Sciatic nerve (tissue), 2 donors: ENCODE measurements at regions of chr2 and their contacts with region 1.

Region 1: DNA sequence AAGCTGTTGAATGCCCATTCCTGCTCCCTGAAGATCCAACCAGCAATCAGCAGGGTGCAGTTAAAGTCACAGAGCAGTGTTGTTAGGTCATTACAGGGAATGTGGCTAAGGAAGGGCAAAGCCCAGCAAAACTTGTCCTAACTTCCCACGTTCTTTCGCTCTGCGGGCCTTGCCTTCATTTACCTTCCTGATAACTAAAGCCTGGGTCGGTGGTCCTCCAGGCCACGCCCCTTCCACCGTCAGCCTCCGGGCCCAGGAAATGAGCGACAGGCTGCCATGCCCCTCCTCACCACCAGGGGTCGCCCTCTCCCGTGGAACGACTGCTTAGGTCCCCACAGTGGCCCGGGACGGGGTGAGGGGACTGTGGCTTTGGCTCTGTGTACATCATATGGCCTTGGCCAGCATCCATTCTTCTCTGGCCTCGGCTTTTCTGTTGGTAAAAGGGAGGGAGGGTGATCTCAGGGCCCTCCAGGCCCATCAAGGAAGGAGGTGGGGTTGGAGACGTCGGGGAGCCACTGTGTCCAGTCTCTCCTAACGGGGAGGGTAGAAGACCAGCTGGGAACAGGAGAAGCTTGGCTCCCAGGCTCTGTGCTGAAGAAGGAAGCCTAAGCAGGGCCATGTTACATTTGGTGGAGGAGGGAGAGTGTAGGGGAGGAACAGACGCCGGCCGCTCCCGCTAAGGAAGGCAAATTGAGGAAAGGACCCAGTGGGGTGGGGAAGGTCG is 2.2 kb downstream of the SH2D6 start:
- DNase-seq: peak; percentile 95
- ATAC-seq: peak; percentile 80

Region 2: DNA sequence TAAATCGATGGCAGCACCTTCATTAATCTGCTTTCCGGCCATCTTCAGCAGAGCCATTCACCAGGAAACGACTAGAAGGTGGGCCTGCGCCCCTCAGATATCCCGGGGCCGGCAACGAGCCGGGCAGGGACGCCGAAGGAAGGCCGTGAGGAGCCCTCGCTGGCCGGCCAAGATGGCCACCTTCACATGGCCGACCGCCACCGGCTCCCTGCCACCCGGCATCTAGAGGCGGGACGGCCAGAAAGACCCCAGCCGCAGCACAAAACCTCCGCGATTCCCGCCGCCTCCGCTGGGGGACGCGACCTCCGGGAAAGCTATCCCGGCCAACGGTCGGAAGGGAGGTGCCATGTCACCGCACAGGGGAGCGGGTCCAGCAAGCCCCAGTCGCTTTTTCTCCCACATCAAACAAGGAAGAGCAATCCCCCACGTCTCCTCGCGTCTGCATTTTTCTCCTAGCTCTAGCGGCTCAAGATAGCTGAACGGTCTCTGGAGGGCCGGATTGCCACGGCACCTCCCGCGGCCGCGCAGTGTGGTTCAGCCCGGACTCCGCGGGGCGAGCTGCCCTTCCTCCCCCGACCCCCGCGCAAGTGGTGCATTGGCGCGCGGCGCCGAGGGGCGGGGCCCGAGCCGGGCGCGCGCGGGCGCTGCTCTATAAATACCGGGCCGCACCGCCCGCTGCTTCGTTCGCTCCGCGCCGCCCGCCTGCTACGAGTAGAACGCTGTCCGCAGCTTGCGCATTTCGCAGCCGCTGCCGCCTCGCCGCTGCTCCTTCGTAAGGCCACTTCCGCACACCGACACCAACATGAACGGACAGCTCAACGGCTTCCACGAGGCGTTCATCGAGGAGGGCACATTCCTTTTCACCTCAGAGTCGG is 118.0 kb after region 1 on chr2 and contains the start of gene MAT2A:
- intact Hi-C with region 1: loop called (anchors 5 kb)
- DNase-seq: peak; percentile 96
- ATAC-seq: peak; percentile 95
- total RNA-seq, gene MAT2A: 168 TPM

Region 3: GRCh38 chr2:85551698-85552678 is 131.3 kb after region 1 on chr2:
- intact Hi-C with region 1: loop called (anchors 2 kb)
- DNase-seq: peak; percentile 90
- ATAC-seq: peak; percentile 82

Region 4: DNA sequence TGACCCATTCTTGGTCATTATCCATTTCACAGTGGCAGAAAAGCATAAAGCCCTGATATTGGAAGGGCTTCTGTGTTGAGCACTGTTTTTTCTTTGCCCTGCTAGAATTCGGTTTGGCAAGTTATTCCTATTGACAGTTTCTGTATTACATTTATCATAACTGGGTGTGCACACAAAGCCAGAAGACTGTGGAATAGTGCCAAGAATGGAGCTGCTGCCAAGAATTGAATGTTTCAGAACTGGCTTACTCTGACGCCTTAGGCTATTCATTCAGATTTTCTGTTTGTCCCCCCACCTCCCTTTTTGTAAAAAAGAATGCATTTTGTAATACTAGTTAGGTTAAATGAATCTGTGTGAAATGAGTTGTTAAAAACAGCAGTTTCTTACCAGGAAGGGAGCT is 1033.1 kb after region 1 on chr2:
- intact Hi-C with region 1: no loop called
- DNase-seq: peak; percentile 70
- ATAC-seq: peak; percentile 76